HepG2 (cell line): ENCODE measurements at regions of chr3 and their contacts with region 1.

Region 1: GRCh38 chr3:185049710-185050109 is 103.2 kb downstream of the C3orf70 start:
- DNase-seq: no peak
- ATAC-seq: no peak; the same call in 2 of the 3 replicates
- H3K4me3 ChIP-seq: no peak overlapping the region
- H3K27ac ChIP-seq: no peak overlapping the region
- H3K4me1 ChIP-seq: peaks cover 23% of the 10 kb centered on the region
- H3K27me3 ChIP-seq: no peaks in the 10 kb centered on the region
- CTCF ChIP-seq: 0 out of 2 replicates have a peak, but pooled peaks have one; percentile 13
- EP300 ChIP-seq: no peak
- POLR2A ChIP-seq: no peak
- RAD21 ChIP-seq: no peak

Region 2: DNA sequence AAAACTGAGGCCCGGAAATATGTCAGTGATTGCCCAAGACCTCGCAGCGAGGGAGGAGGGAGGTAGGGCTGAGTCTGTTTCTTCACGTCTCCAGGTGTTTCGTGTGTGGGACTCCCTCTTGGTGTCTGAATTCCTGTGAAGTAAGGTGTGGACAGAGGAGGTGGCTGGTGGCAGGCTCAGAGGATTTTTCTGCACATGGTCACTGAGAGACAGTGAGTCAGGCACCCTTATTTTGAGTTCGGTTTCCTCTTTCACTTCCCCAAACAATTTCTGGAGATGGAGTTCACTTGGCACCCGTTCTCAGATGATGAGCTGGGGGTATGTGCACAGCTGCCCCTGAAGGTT is 284.0 kb before region 1 on chr3:
- CTCF ChIA-PET with region 1: no interaction called
- POLR2A ChIA-PET with region 1: no interaction called
- in situ Hi-C with region 1: no loop called
- intact Hi-C with region 1: loop called (anchors 10 kb)
- DNase-seq: no peak
- ATAC-seq: no peak
- H3K4me3 ChIP-seq: no peak overlapping the region
- H3K27ac ChIP-seq: no peak overlapping the region
- H3K4me1 ChIP-seq: 0 out of 2 replicates have a peak, but pooled peaks cover 7% of the 10 kb centered on the region
- H3K27me3 ChIP-seq: peaks cover 4 to 31% of the 10 kb centered on the region in 2 experiments; a peak in 3 of 5 replicates
- CTCF ChIP-seq: no peak
- EP300 ChIP-seq: no peak
- POLR2A ChIP-seq: no peak
- RAD21 ChIP-seq: no peak